Astrocyte of the cerebellum (primary cell): ENCODE measurements at regions of chr12 and their contacts with region 1.

Region 1: DNA sequence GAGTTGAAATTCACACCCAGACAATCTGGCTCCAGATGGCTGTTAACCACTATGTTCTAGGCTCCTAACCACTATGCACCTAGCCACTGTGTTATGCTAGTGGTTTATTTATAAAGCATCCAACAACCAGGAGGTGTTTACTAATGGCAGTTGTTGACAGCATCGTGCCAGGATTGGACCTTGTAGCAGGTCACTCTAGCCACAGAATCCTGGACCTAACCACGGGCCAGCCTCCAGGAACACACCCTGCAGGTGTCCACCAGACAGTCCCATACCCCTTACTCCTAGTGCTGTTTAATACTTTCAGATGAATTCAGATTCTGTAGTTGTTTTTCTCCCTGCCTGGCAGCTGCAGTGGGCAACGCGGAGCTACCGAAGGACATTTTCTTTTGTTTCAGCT is 109.4 kb upstream of the MYL2 start:
- DNase-seq: no peak
- H3K4me3 ChIP-seq: no peak overlapping the region
- CTCF ChIP-seq: no peak

Region 2: GRCh38 chr12:110993472-110993833 is 36.3 kb before region 1 on chr12:
- in situ Hi-C with region 1: loop called (anchors 5 kb)
- DNase-seq: no peak
- H3K4me3 ChIP-seq: no peak overlapping the region
- CTCF ChIP-seq: no peak

Region 3: DNA sequence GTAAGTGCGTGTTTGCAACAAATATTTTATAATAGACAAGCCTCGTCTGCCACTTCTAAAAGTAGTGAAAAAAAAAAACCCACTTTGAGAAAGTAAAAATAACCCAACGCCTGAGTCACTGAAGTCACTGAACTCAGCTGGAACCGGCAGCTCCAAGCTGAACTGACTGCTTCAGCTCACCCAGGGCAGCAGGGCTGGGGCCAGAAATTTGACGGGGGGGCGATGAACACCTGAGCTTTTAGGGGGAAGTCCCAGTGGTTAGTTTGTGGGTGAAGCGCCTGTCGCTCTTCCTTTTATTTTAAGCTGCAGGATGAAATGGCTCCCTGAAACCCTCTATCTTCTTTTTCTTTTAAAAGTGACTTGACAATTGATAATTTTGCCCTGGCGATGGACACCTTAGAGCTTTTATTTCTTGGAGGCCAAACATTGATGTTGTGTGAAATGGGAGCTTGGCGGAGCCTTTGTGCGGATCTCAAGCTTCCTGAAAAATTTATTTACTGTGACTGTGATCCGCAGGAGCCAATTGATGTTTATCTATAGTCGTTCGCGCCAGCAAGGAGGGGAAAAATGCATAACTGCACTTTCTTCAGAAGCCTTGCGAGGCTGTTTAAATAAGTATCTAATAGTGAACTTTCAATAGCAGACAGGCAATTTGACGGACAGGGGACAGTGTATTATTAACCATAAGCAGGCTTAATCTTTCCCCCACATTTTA is 63.9 kb after region 1 on chr12:
- in situ Hi-C with region 1: no loop called
- DNase-seq: no peak
- H3K4me3 ChIP-seq: no peak overlapping the region
- CTCF ChIP-seq: no peak